Activated CD8-positive, alpha-beta T cell treated with anti-CD3 and anti-CD28 coated beads for 36 hours (primary cell): ENCODE measurements at regions of chr7 and their contacts with region 1.

Region 1: DNA sequence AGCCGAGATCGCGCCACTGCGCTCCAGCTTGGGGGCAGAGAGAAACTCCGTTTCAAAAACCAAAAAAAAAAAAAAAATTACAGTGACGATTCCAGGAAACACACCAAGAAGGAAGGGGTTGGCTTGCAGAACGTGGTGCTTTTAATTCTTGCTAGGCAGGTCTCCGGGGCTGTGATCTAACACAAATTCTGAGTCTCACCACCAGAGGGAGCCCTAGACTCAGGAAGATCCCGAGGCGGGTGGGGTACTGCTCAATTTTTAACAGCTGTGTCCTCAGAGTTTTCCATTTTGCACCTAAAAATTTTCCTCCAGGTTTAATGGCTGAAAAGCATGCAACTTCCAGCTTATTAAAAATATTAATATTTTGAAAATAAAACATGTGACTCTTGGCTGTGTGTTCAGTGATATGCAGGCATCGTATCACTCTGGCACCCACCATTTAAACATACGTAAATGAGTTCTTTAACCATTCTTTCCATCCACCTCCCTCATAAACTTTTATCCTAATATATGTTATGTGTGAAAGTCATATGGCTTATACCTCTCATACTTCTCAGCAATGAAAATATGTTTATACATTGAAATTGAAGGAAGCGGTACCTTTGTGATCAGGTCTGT is 26.5 kb upstream of the NUB1 start:
- DNase-seq: peak; percentile 87
- ATAC-seq: peak; percentile 89
- H3K4me3 Mint-ChIP-seq: peak overlapping the region; percentile 5
- H3K27ac Mint-ChIP-seq: no peak overlapping the region
- H3K4me1 Mint-ChIP-seq: peaks cover 10% of the 10 kb centered on the region
- H3K27me3 Mint-ChIP-seq: no peaks in the 10 kb centered on the region
- CTCF ChIP-seq: peak; percentile 88

Region 2: DNA sequence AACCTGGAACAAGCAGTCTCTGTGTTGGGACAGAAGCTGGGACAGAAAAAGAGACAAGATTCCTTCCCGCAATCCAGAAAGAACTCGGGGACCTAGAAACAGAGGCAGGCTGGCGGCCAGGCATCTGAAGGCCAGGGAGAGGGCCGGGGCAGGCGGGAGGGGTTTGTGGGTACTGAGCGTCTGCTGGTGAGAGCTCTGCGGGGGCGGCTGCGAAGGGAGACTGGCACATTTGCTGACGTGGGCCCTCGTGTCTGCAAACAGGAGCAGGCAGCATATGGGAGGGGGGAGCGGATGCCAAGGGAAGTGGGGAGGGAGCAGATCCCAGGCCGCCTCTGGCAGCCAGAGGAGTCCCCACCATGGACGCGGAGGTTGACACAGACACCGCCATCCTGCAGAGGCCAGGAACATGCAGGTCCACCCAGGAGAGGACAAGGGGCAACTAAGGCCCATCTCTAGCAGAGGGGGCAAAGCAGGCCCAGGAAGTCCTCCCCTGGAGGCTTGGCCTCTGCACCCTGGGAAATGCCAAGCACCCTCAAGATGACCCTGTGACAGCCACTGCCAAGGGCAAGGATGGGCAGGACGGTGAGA is 369.2 kb before region 1 on chr7:
- CTCF ChIA-PET with region 1: no interaction called
- POLR2A ChIA-PET with region 1: no interaction called
- intact Hi-C with region 1: no loop called
- DNase-seq: no peak
- ATAC-seq: no peak
- H3K4me3 Mint-ChIP-seq: no peak overlapping the region
- H3K27ac Mint-ChIP-seq: no peak overlapping the region
- H3K4me1 Mint-ChIP-seq: peaks cover 19% of the 10 kb centered on the region
- H3K27me3 Mint-ChIP-seq: peaks cover 7% of the 10 kb centered on the region
- CTCF ChIP-seq: no peak

Region 3: GRCh38 chr7:151261529-151261928 is 53.6 kb before region 1 on chr7:
- CTCF ChIA-PET with region 1: no interaction called
- POLR2A ChIA-PET with region 1: no interaction called
- intact Hi-C with region 1: no loop called
- DNase-seq: no peak
- ATAC-seq: no peak
- H3K4me3 Mint-ChIP-seq: no peak overlapping the region
- H3K27ac Mint-ChIP-seq: no peak overlapping the region
- H3K4me1 Mint-ChIP-seq: no peaks in the 10 kb centered on the region
- H3K27me3 Mint-ChIP-seq: no peaks in the 10 kb centered on the region
- CTCF ChIP-seq: no peak

Region 4: DNA sequence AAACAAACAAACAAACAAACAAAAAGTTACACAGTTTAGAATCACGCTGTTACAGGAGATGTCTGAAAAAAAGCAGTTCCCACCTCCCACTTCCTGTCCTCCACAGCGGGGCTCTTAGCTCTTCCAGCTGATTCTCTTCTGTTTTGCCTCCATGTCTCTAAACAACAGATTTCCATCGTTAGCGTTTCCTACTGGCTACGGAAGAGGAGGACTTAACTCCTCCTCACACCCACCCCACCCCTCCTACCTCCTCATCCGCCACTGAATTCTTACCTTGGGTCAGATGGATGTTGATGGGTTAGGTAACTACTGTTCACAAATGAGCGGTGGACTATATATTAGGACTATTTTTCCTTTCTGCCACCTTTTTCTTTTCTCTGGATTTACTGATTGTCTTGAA is 10.3 kb before region 1 on chr7:
- CTCF ChIA-PET with region 1: interaction called, 38 read pairs
- POLR2A ChIA-PET with region 1: no interaction called
- intact Hi-C with region 1: no loop called
- DNase-seq: no peak
- ATAC-seq: no peak
- H3K4me3 Mint-ChIP-seq: peak overlapping the region; percentile 23
- H3K27ac Mint-ChIP-seq: no peak overlapping the region
- H3K4me1 Mint-ChIP-seq: peaks cover 6% of the 10 kb centered on the region
- H3K27me3 Mint-ChIP-seq: peaks cover 24% of the 10 kb centered on the region
- CTCF ChIP-seq: no peak

Region 5: GRCh38 chr7:151334628-151335027 is 19.5 kb after region 1 on chr7:
- CTCF ChIA-PET with region 1: interaction called, 30 read pairs
- POLR2A ChIA-PET with region 1: interaction called, 4 read pairs
- intact Hi-C with region 1: no loop called
- DNase-seq: no peak
- ATAC-seq: no peak
- H3K4me3 Mint-ChIP-seq: no peak overlapping the region
- H3K27ac Mint-ChIP-seq: no peak overlapping the region
- H3K4me1 Mint-ChIP-seq: peaks cover 27% of the 10 kb centered on the region
- H3K27me3 Mint-ChIP-seq: no peaks in the 10 kb centered on the region
- CTCF ChIP-seq: no peak

Region 6: DNA sequence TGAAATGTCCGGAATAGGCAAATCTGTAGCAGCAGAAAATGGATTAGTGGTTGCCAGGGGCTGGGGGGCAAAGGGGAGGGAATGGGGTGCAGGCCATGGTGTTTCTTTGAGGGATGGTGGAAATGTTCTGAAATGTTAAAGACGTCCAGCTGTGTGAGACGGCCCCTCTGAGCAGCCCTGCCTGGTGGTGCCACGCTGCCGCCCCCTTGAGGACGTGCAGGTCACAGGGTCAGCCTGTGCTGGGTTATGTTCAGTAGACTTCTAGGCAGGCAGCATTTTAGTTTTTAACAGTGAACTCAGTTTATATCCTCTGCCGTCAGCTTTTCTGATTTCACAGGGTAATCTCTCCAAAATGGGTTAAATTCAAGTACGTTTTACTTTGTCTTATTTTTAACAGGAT is 35.9 kb after region 1 on chr7:
- CTCF ChIA-PET with region 1: interaction called, 226 read pairs
- POLR2A ChIA-PET with region 1: interaction called, 5 read pairs
- intact Hi-C with region 1: loop called (anchors 1 kb)
- DNase-seq: peak; percentile 75
- ATAC-seq: no peak
- H3K4me3 Mint-ChIP-seq: peak overlapping the region; percentile 52
- H3K27ac Mint-ChIP-seq: peak overlapping the region; percentile 86
- H3K4me1 Mint-ChIP-seq: peaks cover 47% of the 10 kb centered on the region
- H3K27me3 Mint-ChIP-seq: no peaks in the 10 kb centered on the region
- CTCF ChIP-seq: no peak

Region 7: DNA sequence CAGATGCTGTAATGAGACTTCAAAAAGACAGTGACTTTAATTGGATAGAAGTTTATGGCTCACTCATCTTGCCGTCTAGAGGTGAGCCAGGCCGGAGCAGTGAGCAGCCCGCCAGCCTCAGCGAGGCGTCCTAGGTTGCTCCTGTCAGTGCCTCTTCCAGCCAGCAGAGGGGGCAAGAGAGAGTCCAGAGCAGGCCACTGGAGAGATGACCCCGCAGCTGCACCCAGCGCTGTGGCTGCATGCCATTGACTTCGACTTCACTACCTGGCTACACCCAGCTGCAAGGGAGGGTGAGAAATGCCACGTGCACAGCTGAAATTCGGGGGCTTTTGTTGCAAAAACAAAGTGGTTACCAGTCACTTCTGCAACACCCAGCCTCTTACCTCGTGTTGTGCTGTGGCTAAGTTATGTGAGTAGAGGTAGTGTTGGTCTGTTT is 53.0 kb after region 1 on chr7:
- CTCF ChIA-PET with region 1: interaction called, 21 read pairs
- POLR2A ChIA-PET with region 1: no interaction called
- intact Hi-C with region 1: no loop called
- DNase-seq: peak; percentile 88
- ATAC-seq: peak; percentile 100
- H3K4me3 Mint-ChIP-seq: no peak overlapping the region
- H3K27ac Mint-ChIP-seq: no peak overlapping the region
- H3K4me1 Mint-ChIP-seq: peaks cover 11% of the 10 kb centered on the region
- H3K27me3 Mint-ChIP-seq: no peaks in the 10 kb centered on the region
- CTCF ChIP-seq: peak; percentile 93